Naive thymus-derived CD8-positive, alpha-beta T cell (primary cell): ENCODE measurements at regions of chr14 and their contacts with region 1.

Region 1: DNA sequence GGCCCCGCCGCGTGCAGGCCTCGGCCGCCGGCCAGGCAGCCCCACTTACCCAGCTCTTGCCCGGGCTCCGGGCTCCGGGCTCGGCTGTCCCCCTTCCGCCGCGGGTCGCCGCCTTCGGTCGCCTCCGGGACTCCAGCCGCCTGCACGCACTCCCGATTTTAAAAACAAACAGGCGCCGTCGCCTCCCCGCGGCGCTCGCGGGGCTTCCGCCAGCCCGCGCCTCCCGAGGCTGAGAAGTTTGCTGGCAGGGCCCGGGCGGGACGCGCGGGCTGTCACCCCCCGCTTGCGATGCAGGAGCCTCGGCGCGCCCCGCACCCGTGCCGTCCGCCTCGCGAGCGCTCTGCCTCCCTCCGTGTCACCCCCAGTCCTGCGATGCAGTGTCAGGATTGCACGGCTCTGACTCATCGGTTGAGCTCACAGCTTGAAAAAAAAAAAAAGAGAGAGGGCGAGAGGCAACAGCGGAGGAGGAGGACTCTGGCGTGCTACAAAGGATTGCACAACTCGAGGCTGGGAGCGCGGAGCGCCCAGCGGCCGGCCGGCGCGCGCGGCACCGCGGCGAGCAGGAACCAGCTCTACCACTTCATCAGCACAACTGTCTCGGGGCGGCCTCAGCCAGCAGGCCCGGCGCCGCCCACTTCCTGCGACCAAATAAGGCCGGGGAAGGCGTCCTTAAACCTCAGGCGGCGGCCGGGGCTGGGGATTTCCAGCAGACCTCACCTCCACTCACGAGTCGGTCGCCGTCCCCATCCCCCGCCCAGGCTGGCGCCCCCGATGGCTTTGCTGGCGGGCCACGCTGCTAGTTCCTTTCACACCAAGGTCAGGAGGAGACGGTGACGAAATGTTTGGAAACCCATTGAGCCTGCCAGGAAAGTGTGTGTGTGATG is 45.8 kb upstream of the PNMA1 start:
- DNase-seq: peak; percentile 94 to 98 (median 96)
- ATAC-seq: peak; percentile 80 to 85
- H3K4me3 Mint-ChIP-seq: peak overlapping the region; percentile 82 to 92 (median 90)
- H3K27ac Mint-ChIP-seq: peak overlapping the region; percentile 95 to 99 (median 98)
- H3K4me1 Mint-ChIP-seq: peaks cover 50 to 84% (median 80%) of the 10 kb centered on the region in 4 donors
- H3K27me3 Mint-ChIP-seq: no peaks in the 10 kb centered on the region

Region 2: GRCh38 chr14:73728717-73729330 is 31.1 kb before region 1 on chr14:
- POLR2A ChIA-PET with region 1: interaction called, 37 read pairs
- DNase-seq: peak; percentile 66 to 91 (median 83)
- ATAC-seq: peak; percentile 90 to 95
- H3K4me3 Mint-ChIP-seq: no peak overlapping the region
- H3K27ac Mint-ChIP-seq: peak overlapping the region; percentile 65 to 91 (median 81)
- H3K4me1 Mint-ChIP-seq: peaks cover 9 to 26% (median 17%) of the 10 kb centered on the region in 4 donors
- H3K27me3 Mint-ChIP-seq: no peaks in the 10 kb centered on the region

Region 3: GRCh38 chr14:73771848-73772638 is 12.1 kb after region 1 on chr14:
- POLR2A ChIA-PET with region 1: interaction called, 145 read pairs
- DNase-seq: peak in 9 of 10 donors; percentile 44 to 84 (median 65)
- ATAC-seq: peak; percentile 89
- H3K4me3 Mint-ChIP-seq: peak overlapping the region; percentile 43 to 75 (median 70)
- H3K27ac Mint-ChIP-seq: peak overlapping the region; percentile 70 to 97 (median 92)
- H3K4me1 Mint-ChIP-seq: peaks cover 33 to 83% (median 74%) of the 10 kb centered on the region in 4 donors
- H3K27me3 Mint-ChIP-seq: no peaks in the 10 kb centered on the region

Region 4: GRCh38 chr14:73785873-73786695 is 26.1 kb after region 1 on chr14:
- POLR2A ChIA-PET with region 1: interaction called, 387 read pairs
- DNase-seq: peak; percentile 37 to 80 (median 56)
- ATAC-seq: peak; percentile 55 to 66
- H3K4me3 Mint-ChIP-seq: peak overlapping the region; percentile 94 to 98 (median 95)
- H3K27ac Mint-ChIP-seq: peak overlapping the region; percentile 79 to 99 (median 96)
- H3K4me1 Mint-ChIP-seq: peaks cover 34 to 69% (median 63%) of the 10 kb centered on the region in 4 donors
- H3K27me3 Mint-ChIP-seq: no peaks in the 10 kb centered on the region

Region 5: DNA sequence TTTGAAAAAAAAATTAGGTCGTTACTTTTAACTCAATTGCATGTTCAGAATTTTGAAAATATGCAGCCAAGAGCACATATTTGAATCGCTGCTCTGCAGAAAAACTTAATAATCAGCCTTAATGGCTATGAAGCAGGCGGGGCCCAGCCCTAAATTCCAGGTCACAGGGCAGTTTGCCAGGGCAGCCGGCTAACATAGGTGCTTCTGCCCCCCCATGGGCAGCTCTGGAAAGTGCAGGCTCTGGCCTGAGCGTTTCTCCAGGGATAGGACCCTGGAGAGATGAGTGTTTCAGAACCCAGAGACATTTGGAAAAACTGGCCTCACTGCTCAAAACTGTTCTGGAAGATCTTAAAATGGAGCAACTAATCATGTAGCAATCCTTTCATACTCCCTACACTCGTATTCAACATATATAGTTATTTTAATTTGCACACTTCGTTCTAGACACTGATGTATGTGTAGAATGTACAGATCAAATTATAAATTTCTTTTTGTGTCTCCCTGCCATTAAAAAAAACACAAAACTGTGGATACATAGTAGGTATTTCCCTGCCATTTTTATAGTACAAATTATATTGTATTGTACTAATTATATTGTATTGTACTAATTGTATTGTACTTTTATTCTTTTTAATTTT is 65.7 kb after region 1 on chr14:
- POLR2A ChIA-PET with region 1: interaction called, 13 read pairs
- DNase-seq: peak; percentile 60 to 88 (median 71)
- ATAC-seq: peak; percentile 97 to 99
- H3K4me3 Mint-ChIP-seq: no peak overlapping the region
- H3K27ac Mint-ChIP-seq: peak overlapping the region in 1 of 10 donors; percentile 52
- H3K4me1 Mint-ChIP-seq: peaks cover 0 to 9% (median 2%) of the 10 kb centered on the region in 4 donors
- H3K27me3 Mint-ChIP-seq: no peaks in the 10 kb centered on the region